Tibial artery (tissue), 4 donors: ENCODE measurements at regions of chr16 and their contacts with region 1.

Region 1: DNA sequence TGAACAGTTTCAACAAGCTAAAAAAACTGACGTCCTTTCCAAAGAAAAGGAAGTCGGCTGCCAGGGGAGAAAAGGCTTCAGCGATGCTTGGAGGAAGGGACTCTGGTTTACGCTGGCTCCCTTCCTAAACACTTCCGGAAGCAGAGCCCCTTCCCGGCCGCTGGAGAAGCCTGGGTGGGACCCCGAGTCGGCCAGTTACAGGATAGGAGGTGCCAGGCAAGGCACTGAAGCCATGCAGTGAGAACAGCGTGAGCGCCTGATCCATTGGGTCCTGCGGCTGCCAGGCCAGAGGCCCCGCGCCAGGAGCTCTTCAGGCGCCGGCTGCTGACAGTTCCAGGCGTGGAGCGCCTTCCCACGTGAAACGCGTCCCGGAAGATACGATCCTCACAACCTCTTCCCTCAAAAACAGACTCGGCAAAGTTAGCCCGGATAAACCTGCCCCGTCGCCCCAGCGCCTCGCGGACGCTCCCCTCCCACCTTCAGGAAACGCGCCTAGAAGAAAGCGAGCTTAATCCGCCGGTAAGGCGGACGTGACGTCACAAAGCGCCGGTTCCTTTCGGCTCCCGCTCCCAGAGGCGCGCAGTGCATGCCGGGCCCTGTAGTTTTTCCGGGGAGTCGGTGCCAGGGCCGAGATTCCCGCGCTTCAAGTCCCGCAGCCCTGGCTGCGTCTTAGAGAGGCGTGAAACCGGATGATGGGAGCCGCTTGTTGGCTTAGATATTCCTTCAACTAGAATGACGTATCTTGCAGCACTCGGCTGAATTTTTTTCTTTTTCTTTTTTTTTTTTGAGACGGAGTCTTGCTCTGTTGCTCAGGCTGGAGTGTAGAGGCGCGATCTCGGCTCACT is at the start of gene ADAT1:
- DNase-seq: peak; percentile 98 to 99
- H3K4me3 ChIP-seq: peak within 1 kb of the TSS; percentile 62 to 80
- H3K27ac ChIP-seq: peak within 1 kb of the TSS; percentile 86 to 89
- H3K4me1 ChIP-seq: peaks cover 0 to 22% (median 18%) of the 10 kb centered on the region in 4 donors
- H3K27me3 ChIP-seq: no peaks in the 10 kb centered on the region
- CTCF ChIP-seq: no peak

Region 2: GRCh38 chr16:75471723-75472633 is 151.0 kb before region 1 on chr16:
- intact Hi-C with region 1: loop called (anchors 5 kb)
- DNase-seq: peak; percentile 57 to 73
- H3K4me3 ChIP-seq: no peak overlapping the region
- H3K27ac ChIP-seq: no peak overlapping the region
- H3K4me1 ChIP-seq: no peaks in the 10 kb centered on the region
- H3K27me3 ChIP-seq: no peaks in the 10 kb centered on the region
- CTCF ChIP-seq: peak; percentile 73 to 87

Region 3: GRCh38 chr16:75566040-75566810 is 56.8 kb before region 1 on chr16 and contains the start of gene GABARAPL2:
- intact Hi-C with region 1: loop called (anchors 2 kb)
- DNase-seq: peak; percentile 71 to 88
- H3K4me3 ChIP-seq: peak within 1 kb of the TSS; percentile 77 to 96
- H3K27ac ChIP-seq: peak within 1 kb of the TSS; percentile 77 to 82
- H3K4me1 ChIP-seq: peaks cover 0 to 54% (median 38%) of the 10 kb centered on the region in 4 donors
- H3K27me3 ChIP-seq: no peaks in the 10 kb centered on the region
- CTCF ChIP-seq: no peak

Region 4: DNA sequence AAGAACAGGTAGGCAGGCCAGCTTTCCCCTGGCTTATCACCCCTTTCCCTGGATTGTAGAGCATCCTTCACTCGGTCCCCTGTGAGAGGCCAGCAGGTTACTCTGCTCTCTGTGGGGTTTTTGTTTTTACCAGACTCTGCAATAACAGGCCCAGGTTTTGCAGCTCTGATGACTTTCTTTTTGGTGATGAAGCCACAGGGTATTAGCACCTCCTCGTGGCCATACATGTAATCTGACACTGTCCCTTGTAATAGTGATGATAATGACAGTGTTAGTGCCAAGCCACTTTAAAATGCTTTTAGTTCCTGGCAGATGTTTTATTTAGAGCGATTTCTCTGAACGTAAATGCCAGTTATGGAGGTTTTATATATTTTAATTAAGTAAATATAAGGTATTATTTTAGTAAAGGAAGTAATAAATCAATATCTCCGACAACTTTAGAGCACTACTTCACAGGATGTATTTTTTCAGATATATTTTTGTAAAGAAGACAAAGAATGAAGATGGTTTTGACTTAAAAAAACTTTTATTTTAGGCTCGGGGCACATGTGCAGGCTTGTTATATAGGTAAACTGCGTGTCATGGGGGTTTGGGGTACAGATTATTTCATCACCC is 141.3 kb after region 1 on chr16:
- intact Hi-C with region 1: loop called (anchors 10 kb)
- DNase-seq: peak in 1 of 2 donors; percentile 37
- H3K4me3 ChIP-seq: no peak overlapping the region
- H3K27ac ChIP-seq: no peak overlapping the region
- H3K4me1 ChIP-seq: no peaks in the 10 kb centered on the region
- H3K27me3 ChIP-seq: no peaks in the 10 kb centered on the region
- CTCF ChIP-seq: peak; percentile 68 to 78